GM10248 (cell line): ENCODE measurements at regions of chr17 and their contacts with region 1.

Region 1: DNA sequence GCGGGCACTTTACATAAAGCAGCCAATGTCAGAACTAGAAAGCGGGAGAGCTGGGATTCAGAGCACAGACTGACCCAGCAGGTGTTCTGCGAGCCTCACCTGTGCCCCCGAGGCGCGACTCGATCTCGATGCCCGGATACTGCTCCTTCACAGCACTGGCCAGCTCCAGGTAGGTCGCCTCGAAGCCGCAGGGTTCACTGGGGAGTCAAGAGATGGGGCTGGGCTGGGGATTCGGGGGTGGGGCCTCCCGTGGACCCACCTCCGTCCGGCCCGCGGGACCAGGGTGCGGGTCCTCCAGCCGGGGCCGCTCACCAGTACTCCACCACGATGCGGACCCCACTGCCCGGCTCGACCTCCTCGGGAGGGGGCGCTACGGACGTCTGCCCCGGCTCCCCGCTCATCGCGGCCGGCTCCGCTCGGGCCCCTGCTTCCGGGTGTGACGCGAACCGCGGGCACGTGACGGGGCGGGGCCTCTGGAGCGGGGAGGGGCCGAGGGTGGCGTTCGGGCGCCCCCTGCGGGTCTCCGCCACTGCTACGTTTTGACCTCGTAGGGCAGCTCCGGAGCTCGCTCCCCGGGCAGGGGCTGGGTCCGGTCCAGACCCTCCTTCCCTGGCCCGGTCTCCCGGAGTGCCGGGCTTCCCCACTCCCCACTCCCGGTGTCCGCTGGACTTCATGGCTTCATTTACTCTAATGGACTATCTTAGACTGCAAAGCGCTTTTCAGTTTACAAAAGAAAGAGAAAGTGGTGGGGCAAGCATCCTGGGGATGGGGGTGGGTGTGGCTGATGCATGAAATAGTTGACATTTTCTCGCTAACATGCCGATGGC is at the start of gene MIEN1:
- DNase-seq: peak; percentile 99
- CTCF ChIP-seq: peak; percentile 66

Region 2: DNA sequence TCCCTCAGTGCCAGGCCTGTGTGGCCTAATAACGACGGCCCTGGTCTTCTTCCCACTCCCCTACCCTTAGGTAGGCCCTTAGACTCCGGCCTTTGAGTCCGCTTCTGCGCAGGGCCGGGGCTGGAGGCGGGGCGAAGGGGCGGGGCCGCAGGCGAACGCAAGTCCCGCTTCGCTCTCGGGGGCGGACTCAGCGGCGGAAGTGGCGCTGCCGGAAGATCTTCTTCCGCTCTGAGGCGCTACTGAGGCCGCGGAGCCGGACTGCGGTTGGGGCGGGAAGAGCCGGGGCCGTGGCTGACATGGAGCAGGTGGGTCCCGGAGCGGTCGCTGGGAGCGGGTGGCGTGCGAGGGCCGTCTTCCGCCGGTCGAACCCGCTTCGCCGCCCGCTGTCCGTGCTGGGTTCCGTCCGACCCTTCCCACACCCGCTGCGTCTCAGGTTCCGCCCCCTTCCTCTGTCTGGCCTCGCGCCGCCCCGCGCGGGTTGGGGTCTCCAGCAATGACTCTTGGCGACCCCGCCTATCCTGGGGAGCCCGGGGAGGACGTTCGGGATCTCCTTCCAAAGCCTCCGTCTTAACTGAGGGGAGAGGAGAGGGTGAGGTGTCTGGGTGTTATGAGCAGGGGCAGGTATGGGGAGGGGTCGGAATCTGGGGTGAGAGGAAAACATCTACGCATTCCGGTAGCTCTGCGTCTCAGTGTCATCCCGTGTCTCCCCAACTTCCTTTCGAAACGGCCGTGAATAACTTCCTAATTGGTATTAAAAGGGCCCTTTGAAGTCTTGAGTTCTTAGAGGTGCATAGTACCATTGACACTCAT is 93.2 kb before region 1 on chr17 and contains the start of gene STARD3:
- CTCF ChIA-PET with region 1: interaction called, 17 read pairs
- POLR2A ChIA-PET with region 1: no interaction called
- DNase-seq: peak; percentile 97
- CTCF ChIP-seq: no peak

Region 3: GRCh38 chr17:39677542-39678339 is 52.6 kb before region 1 on chr17:
- CTCF ChIA-PET with region 1: interaction called, 14 read pairs
- POLR2A ChIA-PET with region 1: no interaction called
- DNase-seq: no peak
- CTCF ChIP-seq: no peak

Region 4: DNA sequence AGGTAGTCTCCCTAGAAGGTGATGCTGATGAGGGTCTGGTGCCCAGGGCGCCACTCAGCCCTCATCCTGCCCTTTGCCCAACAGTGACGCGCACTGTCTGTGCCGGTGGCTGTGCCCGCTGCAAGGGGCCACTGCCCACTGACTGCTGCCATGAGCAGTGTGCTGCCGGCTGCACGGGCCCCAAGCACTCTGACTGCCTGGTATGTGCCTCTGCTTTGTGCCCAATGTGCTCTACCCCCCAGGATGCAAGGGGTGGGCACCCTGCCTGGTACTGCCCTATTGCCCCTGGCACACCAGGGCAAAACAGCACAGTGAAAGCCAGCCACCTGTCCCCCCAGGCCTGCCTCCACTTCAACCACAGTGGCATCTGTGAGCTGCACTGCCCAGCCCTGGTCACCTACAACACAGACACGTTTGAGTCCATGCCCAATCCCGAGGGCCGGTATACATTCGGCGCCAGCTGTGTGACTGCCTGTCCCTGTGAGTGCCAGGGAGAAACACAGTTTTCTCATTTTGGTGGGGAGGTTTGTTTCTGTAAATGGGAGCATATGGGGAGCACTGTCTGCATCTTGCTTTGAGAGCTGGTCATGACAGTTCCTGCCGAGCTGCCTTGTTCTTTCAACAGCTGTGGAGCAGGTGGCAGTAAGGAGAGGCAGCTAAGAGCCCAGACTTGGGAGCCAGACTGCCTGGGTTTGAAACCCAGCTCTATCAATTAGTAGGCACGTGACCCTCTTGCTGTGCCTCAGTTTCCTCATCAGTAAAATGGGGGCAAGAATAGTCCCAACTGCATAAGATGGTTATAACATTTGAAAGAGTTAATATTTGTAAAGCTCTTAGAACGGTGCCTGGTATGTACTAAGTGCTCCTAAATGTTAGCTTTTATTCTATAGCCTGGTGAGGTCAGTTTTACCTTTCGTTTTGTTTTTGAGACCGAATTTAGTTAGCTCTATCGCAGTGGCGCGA is 20.0 kb before region 1 on chr17:
- CTCF ChIA-PET with region 1: interaction called, 10 read pairs
- POLR2A ChIA-PET with region 1: no interaction called
- DNase-seq: no peak
- CTCF ChIP-seq: no peak

Region 5: GRCh38 chr17:39744836-39745672 is 14.7 kb after region 1 on chr17:
- CTCF ChIA-PET with region 1: interaction called, 17 read pairs
- POLR2A ChIA-PET with region 1: interaction called, 4 read pairs
- DNase-seq: no peak
- CTCF ChIP-seq: no peak